IMR-90 (cell line): ENCODE measurements at regions of chr9 and their contacts with region 1.

Region 1: DNA sequence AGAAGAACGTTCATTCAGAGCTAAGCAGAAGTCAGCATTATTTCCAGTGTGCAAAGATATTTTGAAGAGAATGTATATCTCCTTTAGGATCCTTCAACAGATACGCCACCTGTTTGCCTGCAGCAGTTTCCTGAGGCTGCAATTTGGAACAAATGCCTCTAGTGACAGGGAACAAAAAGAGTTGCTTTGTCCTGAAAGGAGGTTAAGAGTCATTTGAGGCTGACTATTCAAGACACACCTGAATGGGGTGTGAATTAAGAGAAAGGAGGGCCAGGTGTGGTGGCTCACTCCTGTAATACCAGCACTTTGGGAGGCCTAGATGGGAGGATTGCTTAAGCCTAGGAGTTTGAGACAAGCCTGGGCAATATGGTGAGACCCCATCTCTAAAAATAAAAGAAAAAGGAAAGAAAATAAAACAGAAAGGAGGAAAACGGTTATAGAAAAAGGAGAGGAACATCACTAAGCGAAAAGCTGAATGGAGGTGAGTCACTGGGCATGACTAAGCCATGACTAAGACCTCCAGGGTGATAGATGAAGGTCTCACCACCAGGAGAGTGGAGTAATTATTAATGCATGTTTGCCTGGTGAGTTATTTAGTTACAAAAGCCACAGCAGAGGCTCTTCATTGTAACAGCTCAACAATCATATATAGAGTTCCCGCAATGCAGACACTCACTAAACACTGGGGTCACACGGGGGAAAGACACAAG is 255.2 kb upstream of the TNC start:
- DNase-seq: peak; percentile 98
- ATAC-seq: peak; percentile 81
- H3K4me3 ChIP-seq: no peak overlapping the region
- H3K27ac ChIP-seq: peak overlapping the region; percentile 86
- H3K4me1 ChIP-seq: peaks cover 10% of the 10 kb centered on the region
- H3K27me3 ChIP-seq: no peaks in the 10 kb centered on the region
- CTCF ChIP-seq: no peak
- POLR2A ChIP-seq: no peak
- RAD21 ChIP-seq: no peak; the same call in 1 of the 2 replicates

Region 2: GRCh38 chr9:115262477-115262876 is 110.7 kb before region 1 on chr9:
- CTCF ChIA-PET with region 1: no interaction called
- POLR2A ChIA-PET with region 1: no interaction called
- dilution Hi-C with region 1: no loop called
- in situ Hi-C with region 1: no loop called
- intact Hi-C with region 1: loop called (anchors 5 kb)
- DNase-seq: peak; percentile 75
- ATAC-seq: peak; percentile 19
- H3K4me3 ChIP-seq: no peak overlapping the region
- H3K27ac ChIP-seq: peak overlapping the region; percentile 93
- H3K4me1 ChIP-seq: peaks cover 14% of the 10 kb centered on the region
- H3K27me3 ChIP-seq: no peaks in the 10 kb centered on the region
- CTCF ChIP-seq: no peak
- POLR2A ChIP-seq: no peak
- RAD21 ChIP-seq: no peak

Region 3: DNA sequence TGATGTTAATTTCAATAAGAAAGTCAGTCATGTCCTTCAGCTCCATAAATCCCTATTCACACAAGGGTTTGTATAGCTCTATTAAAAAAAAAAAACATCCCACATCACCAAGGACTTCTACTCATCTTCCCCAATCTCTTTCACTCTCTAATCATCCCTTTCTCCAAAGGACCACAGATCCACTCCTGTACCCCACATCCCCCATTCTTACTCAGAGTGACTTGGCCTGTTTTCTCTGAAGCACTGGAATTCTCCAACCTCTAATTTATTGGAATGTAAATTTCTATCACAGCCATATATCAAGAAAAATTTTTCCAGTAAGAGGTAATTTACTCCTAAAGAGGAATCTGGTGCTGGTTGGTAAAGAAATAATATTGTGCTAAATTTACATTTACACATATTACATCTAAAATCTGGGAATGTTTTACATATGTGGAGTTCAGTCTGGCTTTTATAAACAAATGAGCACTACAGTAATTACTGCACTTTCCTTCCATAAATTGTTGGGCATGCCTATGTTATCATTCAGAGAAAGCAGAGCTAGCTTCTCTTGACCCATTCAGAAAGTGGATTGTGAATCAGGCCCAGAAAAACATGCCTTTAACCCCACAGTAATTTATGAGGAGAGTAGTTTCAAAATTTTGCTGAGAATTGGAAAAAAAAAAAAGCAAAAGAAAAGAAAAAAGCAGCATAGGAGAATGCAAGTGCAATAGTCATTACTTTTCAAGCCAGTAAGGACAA is 144.3 kb after region 1 on chr9:
- CTCF ChIA-PET with region 1: no interaction called
- POLR2A ChIA-PET with region 1: no interaction called
- dilution Hi-C with region 1: no loop called
- in situ Hi-C with region 1: no loop called
- intact Hi-C with region 1: loop called (anchors 2 kb)
- DNase-seq: peak; percentile 90
- ATAC-seq: peak; percentile 93
- H3K4me3 ChIP-seq: no peak overlapping the region
- H3K27ac ChIP-seq: peak overlapping the region; percentile 99; the same call in 1 of the 2 replicates
- H3K4me1 ChIP-seq: peaks cover 8% of the 10 kb centered on the region
- H3K27me3 ChIP-seq: no peaks in the 10 kb centered on the region
- CTCF ChIP-seq: no peak
- POLR2A ChIP-seq: no peak
- RAD21 ChIP-seq: no peak

Region 4: DNA sequence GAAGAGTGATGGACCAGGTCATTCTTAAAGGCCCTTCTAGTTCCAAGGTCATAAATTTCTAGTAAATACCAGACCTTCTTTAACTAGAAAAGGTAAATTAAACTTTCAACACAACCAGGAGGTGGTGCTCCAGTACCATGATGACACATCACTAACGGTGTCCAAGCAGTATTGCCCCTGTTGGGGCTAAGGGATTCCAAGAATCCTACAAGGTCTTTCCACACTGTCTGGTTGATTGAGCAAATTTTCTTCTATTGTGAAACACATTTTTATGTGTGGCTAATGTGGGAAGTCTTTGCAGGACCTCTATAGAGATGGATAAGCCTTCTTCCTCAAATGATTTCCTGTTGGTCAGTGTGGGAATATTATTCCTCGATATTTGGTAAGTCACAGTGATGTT is 320.9 kb after region 1 on chr9:
- CTCF ChIA-PET with region 1: no interaction called
- POLR2A ChIA-PET with region 1: no interaction called
- dilution Hi-C with region 1: no loop called
- in situ Hi-C with region 1: no loop called
- intact Hi-C with region 1: no loop called
- DNase-seq: peak; percentile 93
- ATAC-seq: peak; percentile 69
- H3K4me3 ChIP-seq: no peak overlapping the region
- H3K27ac ChIP-seq: no peak overlapping the region
- H3K4me1 ChIP-seq: peaks cover 13% of the 10 kb centered on the region
- H3K27me3 ChIP-seq: no peaks in the 10 kb centered on the region
- CTCF ChIP-seq: peak; percentile 79
- POLR2A ChIP-seq: no peak
- RAD21 ChIP-seq: peak; percentile 86